HCT116 (cell line): ENCODE measurements at regions of chr12 and their contacts with region 1.

Region 1: DNA sequence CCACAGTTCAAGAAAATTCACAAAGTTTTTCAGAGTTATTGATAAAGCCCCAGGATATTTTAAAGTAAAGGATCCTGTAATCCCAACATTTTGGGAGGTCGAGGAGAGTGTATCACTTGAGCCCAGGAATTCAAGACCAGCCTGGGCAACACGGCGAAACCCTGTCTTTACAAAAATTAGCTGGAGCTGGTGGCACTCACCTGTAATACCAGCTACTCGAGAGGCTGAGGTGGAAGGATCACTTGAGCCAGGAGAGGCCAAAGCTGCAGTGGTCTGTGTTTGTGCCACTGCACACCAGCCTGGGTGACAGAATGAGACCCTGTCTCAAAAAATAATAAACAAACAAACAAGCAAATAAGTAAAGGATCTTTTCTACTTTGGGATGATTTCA is 39.5 kb upstream of the LRRK2 start:
- DNase-seq: no peak
- ATAC-seq: no peak
- H3K4me3 ChIP-seq: no peak overlapping the region
- H3K27ac ChIP-seq: no peak overlapping the region
- H3K4me1 ChIP-seq: no peaks in the 10 kb centered on the region
- H3K27me3 ChIP-seq: no peaks in the 10 kb centered on the region
- CTCF ChIP-seq: no peak
- POLR2A ChIP-seq: no peak
- RAD21 ChIP-seq: no peak

Region 2: DNA sequence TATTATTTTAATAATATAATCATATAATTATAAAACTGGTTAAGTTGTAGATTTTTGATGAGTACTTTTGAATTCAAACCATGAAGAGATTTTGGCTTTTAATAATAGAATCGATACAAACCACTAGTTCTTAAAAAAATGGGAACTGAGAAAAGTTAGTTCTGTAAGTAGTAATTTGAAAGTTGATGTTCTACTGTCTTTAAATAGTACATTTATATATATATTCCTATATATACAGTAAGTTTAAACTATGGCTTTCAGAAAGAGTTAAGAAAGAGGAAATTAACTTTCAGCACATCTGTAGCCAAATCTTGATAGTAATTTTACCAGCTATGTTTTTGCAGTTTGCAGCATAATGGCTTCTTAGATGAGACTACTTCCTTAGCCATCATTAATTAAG is 47.3 kb after region 1 on chr12:
- CTCF ChIA-PET with region 1: no interaction called
- POLR2A ChIA-PET with region 1: no interaction called
- RAD21 ChIA-PET with region 1: no interaction called
- intact Hi-C with region 1: loop called (anchors 5 kb)
- DNase-seq: no peak
- ATAC-seq: no peak
- H3K4me3 ChIP-seq: no peak overlapping the region
- H3K27ac ChIP-seq: no peak overlapping the region
- H3K4me1 ChIP-seq: no peaks in the 10 kb centered on the region
- H3K27me3 ChIP-seq: no peaks in the 10 kb centered on the region
- CTCF ChIP-seq: no peak
- POLR2A ChIP-seq: no peak
- RAD21 ChIP-seq: no peak